Calu3 (cell line): ENCODE measurements at regions of chr7 and their contacts with region 1.

Region 1: DNA sequence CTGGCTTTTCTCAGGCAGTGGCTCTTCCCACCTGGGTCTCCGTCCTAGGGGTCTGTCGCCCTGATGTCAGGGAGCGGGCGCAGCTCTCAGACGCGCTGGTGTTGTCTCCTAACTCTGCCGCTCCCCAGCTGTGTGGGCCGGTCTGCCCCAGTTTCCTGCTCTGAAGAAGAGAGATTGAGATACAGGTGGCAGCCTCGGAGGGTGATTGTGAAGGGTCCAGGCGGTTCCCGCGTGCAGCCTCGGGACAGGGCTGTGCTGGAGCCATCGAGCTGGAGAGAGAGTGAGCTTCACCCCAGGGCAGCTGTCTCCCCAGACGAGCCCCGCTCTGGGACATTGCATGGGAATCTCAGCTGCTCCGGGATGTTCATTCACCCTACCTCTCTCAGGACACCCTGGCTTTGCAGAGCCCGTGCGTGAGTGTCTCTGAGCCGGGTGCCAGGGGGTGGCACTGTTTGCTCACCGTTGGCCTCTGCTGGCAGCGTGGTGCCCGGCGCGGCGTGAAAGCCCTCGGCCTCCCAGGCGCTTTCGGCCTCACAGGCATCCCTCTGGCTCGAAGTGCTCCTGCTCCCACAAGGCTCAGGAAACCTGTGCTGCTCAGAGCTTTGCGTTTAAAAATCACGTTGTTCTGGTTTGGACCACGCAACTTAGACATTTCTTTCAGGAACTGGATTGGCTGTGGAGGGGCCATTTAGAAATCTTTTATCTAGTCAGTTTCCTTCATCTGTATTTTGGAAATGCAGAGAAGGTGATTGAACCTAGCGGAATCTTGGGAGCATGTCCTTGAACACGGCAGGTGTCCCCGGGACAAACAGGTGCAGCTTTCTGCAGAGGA is 33.8 kb upstream of the ZFAND2A start:
- DNase-seq: peak; percentile 92
- H3K4me3 Mint-ChIP-seq: no peak overlapping the region
- H3K27ac Mint-ChIP-seq: no peak overlapping the region
- H3K4me1 Mint-ChIP-seq: no peaks in the 10 kb centered on the region
- H3K27me3 Mint-ChIP-seq: peaks cover 77% of the 10 kb centered on the region
- CTCF ChIP-seq: peak; percentile 90

Region 2: DNA sequence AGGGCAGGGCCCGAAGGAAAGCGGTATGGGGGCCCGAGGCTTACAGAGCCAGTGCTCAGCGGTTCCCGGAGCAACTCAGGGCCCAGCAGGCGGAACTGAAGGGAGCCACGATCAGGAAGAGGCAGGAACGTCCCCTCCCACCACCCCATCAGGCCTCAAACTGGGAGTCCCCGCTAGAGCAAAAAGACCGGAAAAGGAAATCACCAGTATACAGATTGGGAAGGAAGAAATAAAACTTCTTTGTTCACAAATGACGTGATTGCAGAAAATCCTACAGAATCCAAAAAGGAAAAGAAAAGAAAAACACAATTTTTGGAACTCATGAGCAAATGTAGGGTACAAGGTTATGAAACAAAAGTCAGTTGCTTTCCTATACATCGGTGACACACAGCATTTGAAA is 12.2 kb before region 1 on chr7:
- CTCF ChIA-PET with region 1: interaction called, 16 read pairs
- intact Hi-C with region 1: no loop called
- DNase-seq: no peak
- H3K4me3 Mint-ChIP-seq: no peak overlapping the region
- H3K27ac Mint-ChIP-seq: no peak overlapping the region
- H3K4me1 Mint-ChIP-seq: peaks cover 7% of the 10 kb centered on the region
- H3K27me3 Mint-ChIP-seq: peaks cover 58% of the 10 kb centered on the region
- CTCF ChIP-seq: no peak

Region 3: GRCh38 chr7:1412322-1413261 is 218.8 kb after region 1 on chr7:
- CTCF ChIA-PET with region 1: interaction called, 5 read pairs
- intact Hi-C with region 1: loop called (anchors 2 kb)
- DNase-seq: peak; percentile 96
- H3K4me3 Mint-ChIP-seq: no peak overlapping the region
- H3K27ac Mint-ChIP-seq: no peak overlapping the region
- H3K4me1 Mint-ChIP-seq: no peaks in the 10 kb centered on the region
- H3K27me3 Mint-ChIP-seq: peaks cover 92% of the 10 kb centered on the region
- CTCF ChIP-seq: peak; percentile 93

Region 4: DNA sequence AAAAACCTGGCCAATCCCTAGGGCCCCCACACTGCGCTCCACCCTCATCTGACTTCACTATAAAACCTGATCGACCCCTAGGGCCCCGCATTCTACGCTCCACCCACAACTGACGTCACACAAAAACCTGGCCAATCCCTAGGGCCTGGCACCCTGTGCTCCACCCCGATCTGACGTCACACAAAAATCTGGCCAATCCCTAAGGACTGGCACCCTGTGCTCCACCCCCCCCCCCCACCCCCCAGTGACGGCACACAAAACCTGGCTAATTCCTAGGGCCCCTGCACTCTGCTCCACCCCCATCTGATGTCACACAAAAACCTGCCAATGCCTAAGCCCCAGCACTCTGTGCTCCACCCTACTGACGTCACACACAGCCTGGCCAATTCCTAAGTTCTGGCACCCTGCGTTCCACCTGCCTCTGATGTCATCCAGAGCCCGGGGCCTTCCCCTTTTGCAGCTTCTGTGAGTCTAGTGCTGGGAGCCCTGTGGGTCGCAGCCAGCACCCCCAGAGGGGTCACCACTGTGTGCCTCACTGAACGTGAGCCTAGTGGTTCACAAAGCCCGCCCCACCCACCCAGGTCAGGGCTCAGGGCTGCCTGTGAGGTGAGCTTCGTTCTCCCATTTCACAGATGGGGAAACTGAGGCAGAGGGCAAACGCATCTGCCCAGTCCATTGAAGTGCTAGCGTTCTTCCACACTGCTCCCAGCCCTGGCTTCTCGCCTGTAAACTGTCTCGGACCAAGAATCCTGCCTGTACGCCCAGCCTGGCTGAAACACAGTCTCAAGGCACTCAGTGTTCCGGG is 224.9 kb after region 1 on chr7:
- CTCF ChIA-PET with region 1: interaction called, 13 read pairs
- intact Hi-C with region 1: loop called (anchors 2 kb)
- DNase-seq: no peak
- H3K4me3 Mint-ChIP-seq: no peak overlapping the region
- H3K27ac Mint-ChIP-seq: no peak overlapping the region
- H3K4me1 Mint-ChIP-seq: no peaks in the 10 kb centered on the region
- H3K27me3 Mint-ChIP-seq: peaks cover 95% of the 10 kb centered on the region
- CTCF ChIP-seq: no peak

Region 5: DNA sequence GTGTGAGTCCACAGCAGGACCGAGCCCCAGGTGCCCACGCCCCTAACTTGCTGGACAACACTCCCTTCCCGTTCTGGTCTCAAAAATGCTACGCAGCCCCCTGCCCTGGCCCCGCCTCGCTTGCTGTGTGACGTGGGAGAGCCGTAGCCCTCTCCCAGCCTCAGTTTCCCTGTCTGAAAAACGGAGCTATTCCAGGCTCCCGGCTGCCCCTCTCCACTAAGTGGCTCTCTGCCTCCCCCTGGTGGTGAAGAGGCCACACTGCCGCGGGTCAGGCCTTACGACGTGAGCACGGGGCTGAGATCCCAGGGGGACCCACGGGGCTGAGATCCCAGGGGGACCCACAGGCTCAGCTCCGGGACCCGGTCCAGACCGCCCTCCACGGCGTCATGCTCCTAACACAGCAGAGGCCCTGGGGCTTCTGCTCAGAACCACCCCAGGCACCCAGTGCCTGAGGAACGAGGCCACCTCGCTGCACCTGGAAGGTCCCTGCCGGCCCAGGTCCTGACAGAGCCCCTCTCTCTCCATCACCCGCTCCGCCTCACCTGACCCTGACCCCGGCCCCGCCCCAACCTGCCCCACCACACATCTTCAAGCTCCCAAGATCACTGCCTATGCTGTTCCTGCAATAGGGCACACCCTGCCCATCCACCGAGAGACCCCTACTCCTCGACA is 238.7 kb after region 1 on chr7:
- CTCF ChIA-PET with region 1: interaction called, 6 read pairs
- intact Hi-C with region 1: loop called (anchors 5 kb)
- DNase-seq: peak; percentile 90
- H3K4me3 Mint-ChIP-seq: no peak overlapping the region
- H3K27ac Mint-ChIP-seq: peak overlapping the region; percentile 0
- H3K4me1 Mint-ChIP-seq: no peaks in the 10 kb centered on the region
- H3K27me3 Mint-ChIP-seq: peaks cover 16% of the 10 kb centered on the region
- CTCF ChIP-seq: peak; percentile 100

Region 6: DNA sequence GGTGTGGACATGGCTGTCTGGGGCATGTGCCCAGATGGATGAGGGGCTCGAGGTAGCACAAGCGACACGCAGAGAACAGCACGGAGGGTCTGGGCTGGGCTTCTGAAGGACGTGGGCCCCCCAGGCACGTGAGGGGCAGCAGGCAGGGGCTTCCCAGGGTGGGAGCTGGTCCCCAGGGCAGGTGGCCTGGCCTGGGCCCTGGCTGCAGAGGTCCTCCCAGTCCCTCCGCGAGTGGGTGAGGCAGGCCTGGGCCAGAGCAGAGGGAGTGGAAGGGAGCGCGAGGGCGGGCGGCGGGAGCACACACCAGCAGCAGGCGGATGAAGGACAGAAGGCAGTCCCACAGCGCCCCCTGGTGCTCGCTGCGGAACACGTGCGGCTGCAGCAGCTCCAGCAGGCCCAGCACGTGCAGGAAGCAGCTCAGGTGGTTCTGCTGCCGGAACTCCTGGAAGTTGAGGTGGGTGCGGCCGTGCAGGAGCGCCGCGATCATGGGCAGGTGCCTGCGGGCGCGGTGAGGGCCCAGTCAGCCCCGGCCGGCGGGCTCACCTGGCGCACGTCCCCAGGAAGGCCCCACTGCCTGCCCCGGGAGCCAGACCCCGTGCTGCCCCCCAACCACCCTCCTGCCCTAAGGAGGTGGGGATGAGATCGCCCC is 280.2 kb after region 1 on chr7:
- CTCF ChIA-PET with region 1: interaction called, 7 read pairs
- intact Hi-C with region 1: loop called (anchors 5 kb)
- DNase-seq: peak; percentile 98
- H3K4me3 Mint-ChIP-seq: no peak overlapping the region
- H3K27ac Mint-ChIP-seq: peak overlapping the region; percentile 44
- H3K4me1 Mint-ChIP-seq: no peaks in the 10 kb centered on the region
- H3K27me3 Mint-ChIP-seq: no peaks in the 10 kb centered on the region
- CTCF ChIP-seq: peak; percentile 99